Activated CD4-positive, alpha-beta T cell treated with anti-CD3 and anti-CD28 coated beads, Interleukin-2, amount 10 ng/mL, durations not matched to agents 24 days and 14 days (primary cell): ENCODE measurements at regions of chr10 and their contacts with region 1.

Region 1: GRCh38 chr10:78972947-78973900 is 95.5 kb upstream of the ZMIZ1 start:
- DNase-seq: peak; percentile 93
- H3K4me3 Mint-ChIP-seq: peak overlapping the region; percentile 70
- H3K27ac Mint-ChIP-seq: peak overlapping the region; percentile 91
- H3K4me1 Mint-ChIP-seq: peaks cover 40% of the 10 kb centered on the region
- H3K27me3 Mint-ChIP-seq: peaks cover 5% of the 10 kb centered on the region

Region 2: GRCh38 chr10:78029269-78030226 is 943.7 kb before region 1 on chr10 and contains the start of gene POLR3A:
- intact Hi-C with region 1: loop called (anchors 5 kb)
- DNase-seq: peak; percentile 97
- H3K4me3 Mint-ChIP-seq: peak within 1 kb of the TSS; percentile 99
- H3K27ac Mint-ChIP-seq: peak within 1 kb of the TSS; percentile 95
- H3K4me1 Mint-ChIP-seq: peaks cover 24% of the 10 kb centered on the region
- H3K27me3 Mint-ChIP-seq: no peaks in the 10 kb centered on the region
- total RNA-seq, gene POLR3A: 27.8 and 28.7 TPM in 2 replicates

Region 3: GRCh38 chr10:78763651-78764311 is 209.4 kb before region 1 on chr10:
- intact Hi-C with region 1: loop called (anchors 5 kb)
- DNase-seq: peak; percentile 63
- H3K4me3 Mint-ChIP-seq: no peak overlapping the region
- H3K27ac Mint-ChIP-seq: peak overlapping the region; percentile 91
- H3K4me1 Mint-ChIP-seq: peaks cover 17% of the 10 kb centered on the region
- H3K27me3 Mint-ChIP-seq: no peaks in the 10 kb centered on the region

Region 4: DNA sequence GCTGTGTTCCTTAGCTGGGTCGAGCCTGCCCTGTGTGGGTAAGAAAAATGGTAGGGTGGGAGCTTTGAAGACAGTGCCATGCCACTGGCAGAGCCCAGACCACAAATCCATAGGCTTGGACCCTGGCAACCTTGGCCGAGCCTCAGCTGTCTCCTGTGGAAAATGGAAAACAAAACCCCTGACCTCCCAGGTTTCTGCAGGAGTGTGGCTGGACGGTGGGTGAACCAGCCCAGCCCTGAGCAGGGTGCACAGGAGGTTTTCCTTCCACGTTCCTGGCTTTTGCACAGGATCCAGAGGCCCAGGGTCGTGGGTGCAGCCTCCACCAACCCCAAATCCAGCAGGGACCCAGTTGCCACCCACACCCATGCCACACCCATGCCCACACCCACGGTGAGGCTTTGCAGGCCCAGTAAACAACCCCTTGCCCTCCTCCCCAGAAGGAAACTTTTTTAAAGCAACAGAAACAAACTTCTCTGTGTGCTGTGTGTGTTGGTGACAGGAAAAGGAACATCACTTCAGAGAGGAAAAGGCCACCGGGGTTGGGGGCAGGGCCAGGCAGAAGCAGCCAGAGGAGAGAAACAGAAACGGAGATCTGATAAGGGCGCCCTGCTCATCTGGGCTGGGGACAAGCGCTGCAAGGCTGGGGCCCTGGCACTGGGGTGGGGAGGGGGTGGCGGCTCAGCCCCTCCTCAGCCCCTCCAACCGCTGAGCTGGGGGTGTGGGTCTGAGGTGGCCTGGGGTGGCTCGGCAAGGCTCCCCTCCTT is 74.8 kb after region 1 on chr10:
- intact Hi-C with region 1: loop called (anchors 5 kb)
- DNase-seq: peak; percentile 93
- H3K4me3 Mint-ChIP-seq: peak overlapping the region; percentile 68
- H3K27ac Mint-ChIP-seq: peak overlapping the region; percentile 95
- H3K4me1 Mint-ChIP-seq: peaks cover 30% of the 10 kb centered on the region
- H3K27me3 Mint-ChIP-seq: peaks cover 4% of the 10 kb centered on the region

Region 5: DNA sequence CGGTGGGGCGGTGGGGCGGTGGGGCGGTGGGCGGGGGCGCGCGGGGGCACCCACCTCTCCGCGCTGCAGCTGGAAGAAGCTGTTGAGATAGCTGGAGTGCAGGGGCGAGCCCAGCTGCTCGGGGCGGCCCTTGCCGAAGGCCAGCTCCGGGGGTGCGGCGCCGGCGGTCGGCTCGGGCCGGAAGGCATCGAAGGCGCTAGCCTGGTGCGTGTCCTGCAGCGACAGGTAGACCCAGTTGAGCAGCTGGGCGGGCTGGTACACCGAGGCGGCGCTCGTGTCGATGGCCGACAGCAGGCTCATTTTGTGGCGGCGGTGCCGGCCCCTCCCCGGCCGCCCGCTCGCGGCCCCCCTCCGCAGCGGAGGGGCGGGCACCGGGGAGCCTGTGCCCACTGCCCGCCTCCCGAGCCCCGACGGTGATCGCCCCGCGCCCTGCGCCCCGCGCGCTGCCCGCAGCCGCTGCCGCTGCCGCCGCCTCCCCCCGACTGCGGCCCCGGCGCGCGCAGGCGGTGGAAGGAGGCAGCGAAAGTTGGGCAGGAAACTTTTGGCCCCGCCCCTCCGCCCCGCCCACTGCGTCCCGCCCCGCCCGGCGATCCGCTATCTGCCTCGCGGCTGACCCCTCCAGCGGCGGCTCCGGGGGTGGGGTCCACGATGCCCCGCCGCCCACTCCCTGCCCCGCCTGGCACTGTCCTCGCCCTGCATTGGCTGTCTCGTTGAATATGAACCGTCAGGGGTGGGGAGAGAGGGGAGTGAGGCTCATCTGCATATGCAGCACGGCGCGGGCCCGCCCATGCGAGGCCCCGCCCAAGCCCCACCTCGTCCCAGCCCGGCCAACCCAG is 472.1 kb after region 1 on chr10 and contains the start of gene ZCCHC24:
- intact Hi-C with region 1: loop called (anchors 10 kb)
- DNase-seq: peak; percentile 98
- H3K4me3 Mint-ChIP-seq: peak within 1 kb of the TSS; percentile 86
- H3K27ac Mint-ChIP-seq: peak within 1 kb of the TSS; percentile 66
- H3K4me1 Mint-ChIP-seq: peaks cover 22% of the 10 kb centered on the region
- H3K27me3 Mint-ChIP-seq: peaks cover 44% of the 10 kb centered on the region
- total RNA-seq, gene ZCCHC24: 0.66 and 1.4 TPM in 2 replicates